Dendritic cell treated with granulocyte-macrophage colony-stimulating factor and Interleukin-4, amounts not matched to agents 40 ng/mL and 50 ng/mL, for 4 days (primary cell): ENCODE measurements at regions of chr12 and their contacts with region 1.

Region 1: GRCh38 chr12:63843721-63844390 is 644 bp upstream of the SRGAP1 start:
- H3K4me3 Mint-ChIP-seq: peak overlapping the region; percentile 100
- H3K27ac Mint-ChIP-seq: peak overlapping the region; percentile 95
- H3K4me1 Mint-ChIP-seq: peaks cover 26% of the 10 kb centered on the region
- H3K27me3 Mint-ChIP-seq: peaks cover 16% of the 10 kb centered on the region

Region 2: GRCh38 chr12:63802012-63802608 is 41.7 kb before region 1 on chr12:
- intact Hi-C with region 1: no loop called
- H3K4me3 Mint-ChIP-seq: no peak overlapping the region
- H3K27ac Mint-ChIP-seq: no peak overlapping the region
- H3K4me1 Mint-ChIP-seq: no peaks in the 10 kb centered on the region
- H3K27me3 Mint-ChIP-seq: no peaks in the 10 kb centered on the region

Region 3: GRCh38 chr12:63917864-63918799 is 74.3 kb after region 1 on chr12:
- intact Hi-C with region 1: loop called (anchors 5 kb)
- H3K4me3 Mint-ChIP-seq: peak overlapping the region; percentile 35
- H3K27ac Mint-ChIP-seq: peak overlapping the region; percentile 85
- H3K4me1 Mint-ChIP-seq: peaks cover 46% of the 10 kb centered on the region
- H3K27me3 Mint-ChIP-seq: no peaks in the 10 kb centered on the region

Region 4: GRCh38 chr12:63955831-63956609 is 112.2 kb after region 1 on chr12:
- intact Hi-C with region 1: loop called (anchors 5 kb)
- H3K4me3 Mint-ChIP-seq: peak overlapping the region; percentile 34
- H3K27ac Mint-ChIP-seq: peak overlapping the region; percentile 85
- H3K4me1 Mint-ChIP-seq: peaks cover 43% of the 10 kb centered on the region
- H3K27me3 Mint-ChIP-seq: no peaks in the 10 kb centered on the region

Region 5: DNA sequence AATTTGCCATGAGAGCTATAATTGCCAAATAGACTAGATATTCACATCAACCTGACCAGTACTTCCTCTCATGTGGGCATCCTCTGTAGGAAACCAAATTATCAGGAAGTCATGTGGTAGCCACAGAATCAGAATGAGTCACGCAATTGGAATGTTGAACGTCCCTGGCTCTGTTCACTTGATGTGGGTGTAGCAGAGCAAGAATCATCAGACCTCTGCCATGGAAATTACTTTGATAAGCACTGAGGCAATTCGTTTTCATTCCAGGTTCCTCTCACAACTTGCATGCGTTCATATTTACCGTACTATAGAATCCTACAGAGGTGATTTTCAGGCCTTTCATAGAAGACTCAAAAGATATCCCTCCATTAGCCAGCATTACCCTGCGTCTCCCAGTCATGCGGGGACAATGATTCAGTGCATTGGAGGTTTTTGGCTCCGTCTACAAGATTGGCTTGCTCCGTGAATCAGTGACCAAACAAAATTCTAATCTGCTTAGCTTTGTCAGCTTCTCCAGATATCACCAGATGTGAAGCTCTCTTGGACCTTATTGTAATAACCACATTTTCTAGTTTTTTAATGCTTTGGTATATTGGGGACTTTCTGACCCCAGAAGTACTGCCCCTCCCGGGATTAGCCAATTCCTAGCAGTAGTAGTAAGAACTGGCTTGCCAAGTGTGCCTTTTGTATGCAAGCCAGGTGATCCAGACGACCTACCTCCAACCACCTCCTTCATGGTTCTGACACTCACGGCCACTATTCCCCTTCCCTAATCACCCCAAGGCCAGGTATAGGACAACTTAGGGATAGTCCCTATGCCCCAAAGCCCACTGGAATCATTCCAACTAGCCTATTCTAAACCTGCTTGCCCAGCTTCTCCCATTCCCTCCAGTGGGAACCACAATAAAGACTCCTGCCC is 244.8 kb after region 1 on chr12:
- intact Hi-C with region 1: loop called (anchors 5 kb)
- H3K4me3 Mint-ChIP-seq: peak overlapping the region; percentile 23
- H3K27ac Mint-ChIP-seq: peak overlapping the region; percentile 89
- H3K4me1 Mint-ChIP-seq: peaks cover 53% of the 10 kb centered on the region
- H3K27me3 Mint-ChIP-seq: no peaks in the 10 kb centered on the region

Region 6: GRCh38 chr12:64181504-64182291 is 337.8 kb after region 1 on chr12:
- intact Hi-C with region 1: loop called (anchors 1 kb)
- H3K4me3 Mint-ChIP-seq: no peak overlapping the region
- H3K27ac Mint-ChIP-seq: no peak overlapping the region
- H3K4me1 Mint-ChIP-seq: peaks cover 25% of the 10 kb centered on the region
- H3K27me3 Mint-ChIP-seq: peaks cover 4% of the 10 kb centered on the region

Region 7: DNA sequence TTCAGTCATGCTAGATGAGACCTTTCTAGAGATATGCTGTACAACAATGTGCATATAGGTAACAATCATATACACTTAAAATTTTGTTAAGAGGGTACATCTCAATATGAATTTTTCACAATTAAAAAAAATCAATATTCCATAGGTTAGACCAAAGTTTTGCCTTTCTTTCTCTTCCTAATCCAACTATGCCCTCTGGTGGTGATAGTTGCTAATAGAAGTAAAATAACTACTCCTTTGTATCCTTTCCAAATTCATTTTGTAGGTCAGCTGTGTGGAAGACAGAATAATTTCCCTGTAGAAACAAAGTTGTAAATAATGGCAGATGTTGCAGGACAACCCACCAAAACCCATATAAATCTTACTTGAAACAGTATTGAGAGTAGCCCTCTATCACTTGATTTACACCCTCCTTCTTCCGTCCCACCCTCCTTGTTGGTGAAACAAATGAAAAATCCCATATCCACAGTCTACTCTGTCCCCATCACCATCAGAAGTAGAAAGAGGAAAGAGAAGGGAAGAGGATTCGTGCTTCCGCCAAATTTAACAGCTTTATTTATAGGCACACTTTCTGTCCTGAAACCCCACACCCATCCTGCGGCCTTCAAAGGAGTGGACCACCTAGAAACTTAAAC is 412.4 kb after region 1 on chr12:
- intact Hi-C with region 1: loop called (anchors 1 kb)
- H3K4me3 Mint-ChIP-seq: no peak overlapping the region
- H3K27ac Mint-ChIP-seq: no peak overlapping the region
- H3K4me1 Mint-ChIP-seq: peaks cover 8% of the 10 kb centered on the region
- H3K27me3 Mint-ChIP-seq: no peaks in the 10 kb centered on the region